ENCODE measurements at regions of chr17 and their contacts with region 1.

Region 1: DNA sequence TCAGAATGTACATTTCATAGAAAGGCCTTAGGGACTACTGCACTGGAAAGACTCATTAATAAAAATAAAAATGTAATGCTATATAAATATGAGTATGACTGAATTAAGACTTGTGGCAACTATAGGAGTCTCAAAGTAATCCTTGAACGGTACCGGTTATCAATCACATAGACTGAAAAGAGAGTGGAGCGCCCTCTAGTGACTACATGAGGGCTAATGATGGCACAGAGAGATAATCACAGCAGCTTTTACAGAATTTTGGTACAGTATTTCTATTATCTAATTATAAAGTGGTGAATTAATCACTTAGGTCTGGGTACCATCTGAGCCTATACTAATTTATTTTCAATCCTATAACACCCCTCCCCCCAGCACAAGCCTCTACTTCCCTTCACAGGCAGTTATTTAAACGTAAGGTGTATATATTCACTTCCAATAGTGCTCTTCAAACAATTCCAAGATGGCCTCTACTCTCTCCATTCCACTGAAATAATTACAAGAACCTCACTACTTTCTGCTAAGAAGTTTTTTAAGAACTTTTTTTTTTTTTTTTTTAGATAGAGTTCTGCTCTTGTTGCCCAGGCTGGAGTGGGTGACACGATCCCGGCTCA is 40.7 kb upstream of the ANKFY1 start:
- DNase-seq: no peak
- H3K4me3 ChIP-seq: no peak overlapping the region
- H3K27ac ChIP-seq: no peak overlapping the region
- H3K4me1 ChIP-seq: peaks cover 0 to 5% of the 10 kb centered on the region in 2 donors
- H3K27me3 ChIP-seq: no peaks in the 10 kb centered on the region
- CTCF ChIP-seq: peak; percentile 31 to 68 (median 67)

Region 2: DNA sequence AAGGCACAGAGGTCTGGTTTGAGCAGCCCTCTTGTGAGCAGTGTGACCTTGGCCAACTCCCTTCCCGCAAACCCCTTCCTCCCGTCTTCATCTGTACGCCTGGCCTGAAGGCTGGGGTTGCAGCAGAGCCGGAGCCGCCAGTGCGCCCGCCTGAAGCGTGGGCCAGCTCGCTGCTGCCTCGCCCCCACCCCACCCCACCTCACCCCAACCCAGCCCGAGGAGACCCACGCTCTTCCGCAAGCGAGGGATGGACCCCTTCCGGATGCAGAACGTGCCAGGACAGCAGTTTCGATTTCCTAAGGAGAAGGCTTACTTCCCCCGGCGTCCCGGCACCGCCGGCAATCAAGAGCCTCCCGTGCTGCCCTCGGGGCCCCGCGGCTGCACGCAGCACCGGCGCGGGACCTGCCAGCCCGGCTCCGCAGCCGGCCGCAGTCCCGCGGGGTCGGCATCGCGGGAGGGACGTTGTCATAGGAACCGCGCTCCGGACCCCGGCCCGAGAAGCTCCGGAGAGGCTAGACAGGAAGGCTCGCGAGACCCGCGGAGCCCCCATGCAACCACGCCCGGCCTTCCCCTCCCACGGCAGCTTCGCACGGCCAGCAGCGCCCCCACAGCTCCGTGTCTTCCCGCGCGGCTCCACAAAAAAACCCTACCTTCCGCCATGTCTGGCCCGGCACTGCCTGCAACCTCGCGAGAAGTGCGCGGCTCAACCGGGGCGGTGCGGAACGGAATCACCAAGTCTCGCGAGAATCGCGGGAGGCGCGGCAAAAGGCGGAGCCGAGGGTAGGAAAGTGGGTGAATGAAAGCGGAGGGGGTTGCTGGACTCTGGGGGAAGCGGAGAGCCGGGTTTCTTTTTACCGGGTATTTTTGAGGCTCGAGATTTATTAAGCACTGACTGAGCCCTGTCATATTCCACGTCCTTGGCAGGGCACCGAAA is 41.0 kb before region 1 on chr17 and contains the start of gene ANKFY1:
- intact Hi-C with region 1: loop called (anchors 5 kb)
- DNase-seq: peak; percentile 83 to 98
- H3K4me3 ChIP-seq: peak within 1 kb of the TSS; percentile 87 to 100
- H3K27ac ChIP-seq: peak within 1 kb of the TSS; percentile 77 to 83
- H3K4me1 ChIP-seq: peaks cover 11 to 25% of the 10 kb centered on the region in 2 donors
- H3K27me3 ChIP-seq: no peaks in the 10 kb centered on the region
- CTCF ChIP-seq: peak in 2 of 3 experiments; percentile 17 to 40
- total RNA-seq, gene ANKFY1: 16.2 TPM